Tibial artery (tissue), 4 donors: ENCODE measurements at regions of chr22 and their contacts with region 1.

Region 1: GRCh38 chr22:40636380-40637182 is at the start of gene MRTFA:
- DNase-seq: peak; percentile 100
- H3K4me3 ChIP-seq: peak within 1 kb of the TSS; percentile 65 to 83
- H3K27ac ChIP-seq: peak within 1 kb of the TSS; percentile 83 to 89
- H3K4me1 ChIP-seq: peaks cover 0 to 39% (median 16%) of the 10 kb centered on the region in 4 donors
- H3K27me3 ChIP-seq: no peaks in the 10 kb centered on the region
- CTCF ChIP-seq: no peak

Region 2: DNA sequence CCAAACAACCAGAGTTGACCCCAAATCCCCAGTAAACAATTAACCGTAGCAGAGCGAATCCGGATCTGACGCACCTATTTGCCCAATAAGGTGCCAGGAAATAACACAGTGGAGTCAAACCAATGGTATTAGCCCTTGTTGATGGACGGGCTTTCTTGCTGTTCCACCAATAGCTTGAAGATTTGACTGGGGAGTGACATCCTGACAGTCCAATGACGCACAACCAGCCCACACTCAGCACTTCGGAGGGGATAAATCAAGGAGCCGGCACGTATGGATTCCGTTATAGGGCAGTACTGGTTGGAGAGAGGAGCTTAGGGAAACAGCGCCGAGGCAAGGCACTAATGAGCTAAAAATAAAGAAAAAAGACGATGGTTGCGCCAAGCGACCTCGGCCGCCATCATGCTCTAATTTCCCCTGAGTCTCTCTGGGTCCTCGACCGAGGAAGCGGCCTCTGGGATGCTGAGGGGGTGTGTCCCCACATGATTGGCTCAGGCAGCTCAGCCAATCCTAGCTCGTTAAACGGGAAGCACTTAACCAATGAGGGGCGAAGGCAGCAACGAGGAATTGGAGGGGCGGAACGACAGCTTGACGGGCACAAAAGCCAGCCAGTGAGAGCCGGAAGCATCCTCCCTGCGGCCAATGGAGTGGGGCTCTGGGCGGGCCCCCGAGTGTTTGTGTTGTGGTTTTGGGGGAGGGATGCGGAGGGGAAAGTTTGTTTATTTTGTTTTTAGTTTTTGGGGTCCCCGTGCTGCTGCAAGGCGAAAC is 592.3 kb before region 1 on chr22:
- intact Hi-C with region 1: loop called (anchors 10 kb)
- DNase-seq: peak; percentile 98 to 99
- H3K4me3 ChIP-seq: peak overlapping the region; percentile 87 to 90
- H3K27ac ChIP-seq: peak overlapping the region; percentile 81 to 96
- H3K4me1 ChIP-seq: peaks cover 0 to 38% (median 16%) of the 10 kb centered on the region in 4 donors
- H3K27me3 ChIP-seq: peaks cover 0 to 13% of the 10 kb centered on the region in 2 donors
- CTCF ChIP-seq: no peak

Region 3: GRCh38 chr22:40525249-40525884 is 111.2 kb before region 1 on chr22:
- intact Hi-C with region 1: loop called (anchors 10 kb)
- DNase-seq: peak in 1 of 2 donors; percentile 52
- H3K4me3 ChIP-seq: no peak overlapping the region
- H3K27ac ChIP-seq: peak overlapping the region; percentile 16 to 83
- H3K4me1 ChIP-seq: peaks cover 0 to 76% (median 26%) of the 10 kb centered on the region in 4 donors
- H3K27me3 ChIP-seq: no peaks in the 10 kb centered on the region
- CTCF ChIP-seq: peak; percentile 48 to 51

Region 4: DNA sequence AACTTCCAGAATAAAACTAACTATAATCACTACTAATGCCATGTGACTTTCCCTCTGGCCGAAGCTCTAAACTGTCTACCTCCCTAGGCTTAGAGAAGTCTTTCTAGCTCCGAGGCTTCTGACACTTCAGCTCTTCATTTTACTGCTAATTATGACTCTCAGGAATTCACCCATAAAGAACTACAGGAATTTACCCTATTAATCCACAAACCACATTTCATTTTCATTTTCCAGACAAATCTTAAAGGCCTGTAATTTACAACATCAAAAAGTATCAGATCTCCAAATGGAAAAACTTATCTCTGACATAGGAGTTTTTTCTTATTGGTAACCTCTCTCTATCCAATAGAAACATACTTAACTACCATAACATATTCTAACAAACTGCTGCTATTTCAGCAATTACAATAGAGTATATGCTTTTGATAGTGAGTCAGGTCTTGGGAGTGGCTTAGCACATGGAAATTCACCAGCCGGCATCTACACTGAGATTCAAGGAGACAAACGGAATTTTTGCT is 33.4 kb before region 1 on chr22:
- intact Hi-C with region 1: no loop called
- DNase-seq: no peak
- H3K4me3 ChIP-seq: no peak overlapping the region
- H3K27ac ChIP-seq: peak overlapping the region in 1 of 2 donors; percentile 0
- H3K4me1 ChIP-seq: peaks cover 0 to 86% (median 37%) of the 10 kb centered on the region in 4 donors
- H3K27me3 ChIP-seq: no peaks in the 10 kb centered on the region
- CTCF ChIP-seq: no peak

Region 5: GRCh38 chr22:41417622-41418390 is 781.2 kb after region 1 on chr22:
- intact Hi-C with region 1: no loop called
- DNase-seq: peak; percentile 94 to 99
- H3K4me3 ChIP-seq: peak overlapping the region in 1 of 2 donors; percentile 4
- H3K27ac ChIP-seq: peak overlapping the region; percentile 82 to 100
- H3K4me1 ChIP-seq: peaks cover 0 to 69% (median 52%) of the 10 kb centered on the region in 4 donors
- H3K27me3 ChIP-seq: no peaks in the 10 kb centered on the region
- CTCF ChIP-seq: no peak